CD4-positive, alpha-beta T cell (primary cell): ENCODE measurements at regions of chr18 and their contacts with region 1.

Region 1: GRCh38 chr18:66211749-66212148 is 392.1 kb downstream of the CDH19 start:
- DNase-seq: no peak
- ATAC-seq: no peak
- H3K4me3 ChIP-seq: no peak overlapping the region
- H3K4me3 Mint-ChIP-seq: no peak overlapping the region
- H3K27ac ChIP-seq: no peak overlapping the region
- H3K27ac Mint-ChIP-seq: no peak overlapping the region
- H3K4me1 ChIP-seq: no peaks in the 10 kb centered on the region
- H3K4me1 Mint-ChIP-seq: no peaks in the 10 kb centered on the region
- H3K27me3 ChIP-seq: no peaks in the 10 kb centered on the region
- H3K27me3 Mint-ChIP-seq: no peaks in the 10 kb centered on the region
- CTCF ChIP-seq: no peak

Region 2: DNA sequence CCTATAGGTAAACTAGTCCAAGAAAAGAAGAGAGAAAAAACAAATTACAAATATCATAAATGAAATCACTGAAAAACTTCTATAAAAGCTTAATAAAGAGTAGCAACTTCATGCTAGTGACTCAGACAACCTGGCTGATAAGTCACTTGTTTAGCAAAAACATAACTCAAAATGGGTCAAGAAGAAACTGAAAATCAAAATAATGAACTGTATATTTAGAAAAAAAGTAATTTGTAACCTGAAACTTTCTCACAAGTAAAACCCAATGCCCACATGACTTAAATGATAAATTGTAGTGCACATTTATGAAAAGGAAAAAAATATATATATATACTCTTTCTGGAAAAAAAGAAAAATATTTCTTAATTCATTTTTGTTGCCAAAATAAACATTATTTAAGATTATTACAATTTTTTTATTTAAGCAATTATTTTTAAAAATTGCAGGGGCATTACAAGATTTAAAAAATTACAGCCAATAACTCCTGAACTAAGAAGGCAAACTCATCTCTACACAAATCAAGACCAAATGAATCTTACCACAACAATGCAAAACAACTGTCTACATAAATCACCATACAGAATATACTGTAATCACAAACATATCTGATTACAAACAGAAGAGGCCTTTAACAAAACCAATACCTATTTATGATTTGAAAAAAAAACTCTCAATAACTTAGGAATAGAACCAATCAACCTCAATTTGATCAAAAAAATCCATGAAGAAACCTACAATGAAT is 54.6 kb before region 1 on chr18:
- CTCF ChIA-PET with region 1: no interaction called
- POLR2A ChIA-PET with region 1: no interaction called
- intact Hi-C with region 1: loop called in 1 of 2 experiments (anchors 10 kb)
- DNase-seq: no peak
- ATAC-seq: no peak
- H3K4me3 ChIP-seq: no peak overlapping the region
- H3K4me3 Mint-ChIP-seq: no peak overlapping the region
- H3K27ac ChIP-seq: no peak overlapping the region
- H3K27ac Mint-ChIP-seq: no peak overlapping the region
- H3K4me1 ChIP-seq: no peaks in the 10 kb centered on the region
- H3K4me1 Mint-ChIP-seq: no peaks in the 10 kb centered on the region
- H3K27me3 ChIP-seq: no peaks in the 10 kb centered on the region
- H3K27me3 Mint-ChIP-seq: no peaks in the 10 kb centered on the region
- CTCF ChIP-seq: no peak

Region 3: DNA sequence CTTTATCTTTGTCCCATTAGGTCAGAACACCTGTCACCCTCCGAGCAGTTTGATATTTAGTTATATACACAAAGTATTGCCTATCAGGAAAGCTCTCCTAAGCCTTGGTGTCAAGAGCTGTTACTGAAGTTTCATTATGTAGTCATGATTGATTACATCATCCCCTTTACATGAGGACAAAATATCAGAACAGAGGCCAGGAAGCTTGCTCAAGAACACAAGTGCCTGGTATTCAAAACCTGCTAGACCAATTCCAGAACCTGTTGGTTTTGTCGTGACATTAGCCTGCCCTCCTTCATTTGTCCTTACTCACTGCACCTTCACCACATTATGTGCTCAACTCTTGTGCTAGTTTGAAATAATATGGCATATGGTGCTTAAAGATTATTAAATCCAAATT is 15.0 kb after region 1 on chr18:
- CTCF ChIA-PET with region 1: no interaction called
- POLR2A ChIA-PET with region 1: no interaction called
- intact Hi-C with region 1: no loop called
- DNase-seq: no peak
- ATAC-seq: no peak
- H3K4me3 ChIP-seq: no peak overlapping the region
- H3K4me3 Mint-ChIP-seq: no peak overlapping the region
- H3K27ac ChIP-seq: no peak overlapping the region
- H3K27ac Mint-ChIP-seq: no peak overlapping the region
- H3K4me1 ChIP-seq: no peaks in the 10 kb centered on the region
- H3K4me1 Mint-ChIP-seq: no peaks in the 10 kb centered on the region
- H3K27me3 ChIP-seq: no peaks in the 10 kb centered on the region
- H3K27me3 Mint-ChIP-seq: no peaks in the 10 kb centered on the region
- CTCF ChIP-seq: no peak

Region 4: DNA sequence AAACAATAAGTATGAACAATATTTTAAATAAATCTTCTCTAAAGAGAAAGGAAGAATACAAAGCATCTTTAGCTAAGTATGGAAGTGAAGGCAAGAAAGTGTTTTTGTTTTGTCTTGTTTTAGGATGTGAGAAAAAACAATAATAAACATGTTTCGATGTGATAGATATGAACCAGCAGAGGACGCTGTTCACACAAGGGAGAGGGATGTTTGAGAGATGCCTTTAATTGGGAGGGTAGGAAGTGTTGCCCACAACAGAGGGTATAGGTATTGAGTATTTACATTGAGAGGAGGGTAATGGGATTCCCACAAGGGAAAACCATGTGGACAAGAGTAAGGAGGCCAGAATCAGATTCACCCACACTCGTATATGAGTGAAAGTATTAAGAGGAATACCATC is 337.0 kb after region 1 on chr18:
- CTCF ChIA-PET with region 1: no interaction called
- POLR2A ChIA-PET with region 1: no interaction called
- intact Hi-C with region 1: no loop called
- DNase-seq: no peak
- ATAC-seq: no peak
- H3K4me3 ChIP-seq: no peak overlapping the region
- H3K4me3 Mint-ChIP-seq: no peak overlapping the region
- H3K27ac ChIP-seq: no peak overlapping the region
- H3K27ac Mint-ChIP-seq: no peak overlapping the region
- H3K4me1 ChIP-seq: no peaks in the 10 kb centered on the region
- H3K4me1 Mint-ChIP-seq: no peaks in the 10 kb centered on the region
- H3K27me3 ChIP-seq: no peaks in the 10 kb centered on the region
- H3K27me3 Mint-ChIP-seq: no peaks in the 10 kb centered on the region
- CTCF ChIP-seq: no peak